ENCODE measurements at regions of chr1 and their contacts with region 1.

Region 1: GRCh38 chr1:67489643-67490042 is 59.4 kb upstream of the SERBP1 start:
- DNase-seq: peak in 1 of 4 donors; percentile 35
- ATAC-seq: peak; percentile 78
- H3K4me3 ChIP-seq: no peak overlapping the region
- H3K27ac ChIP-seq: no peak overlapping the region
- H3K4me1 ChIP-seq: no peaks in the 10 kb centered on the region
- H3K27me3 ChIP-seq: no peaks in the 10 kb centered on the region
- CTCF ChIP-seq: peak in 1 of 2 donors; percentile 19

Region 2: GRCh38 chr1:67230539-67230938 is 259.1 kb before region 1 on chr1:
- intact Hi-C with region 1: loop called in 1 of 2 experiments (anchors 10 kb)
- DNase-seq: no peak
- ATAC-seq: no peak
- H3K4me3 ChIP-seq: no peak overlapping the region
- H3K27ac ChIP-seq: no peak overlapping the region
- H3K4me1 ChIP-seq: no peaks in the 10 kb centered on the region
- H3K27me3 ChIP-seq: no peaks in the 10 kb centered on the region
- CTCF ChIP-seq: no peak

Region 3: GRCh38 chr1:67347688-67348472 is 141.8 kb before region 1 on chr1:
- intact Hi-C with region 1: loop called in 1 of 2 experiments (anchors 5 kb)
- DNase-seq: peak in 2 of 4 donors; percentile 46 to 49
- ATAC-seq: peak; percentile 93
- H3K4me3 ChIP-seq: no peak overlapping the region
- H3K27ac ChIP-seq: no peak overlapping the region
- H3K4me1 ChIP-seq: no peaks in the 10 kb centered on the region
- H3K27me3 ChIP-seq: no peaks in the 10 kb centered on the region
- CTCF ChIP-seq: peak; percentile 61 to 67

Measured in left lung (tissue), 14 donors.